ENCODE measurements at regions of chr17 and their contacts with region 1.

Region 1: DNA sequence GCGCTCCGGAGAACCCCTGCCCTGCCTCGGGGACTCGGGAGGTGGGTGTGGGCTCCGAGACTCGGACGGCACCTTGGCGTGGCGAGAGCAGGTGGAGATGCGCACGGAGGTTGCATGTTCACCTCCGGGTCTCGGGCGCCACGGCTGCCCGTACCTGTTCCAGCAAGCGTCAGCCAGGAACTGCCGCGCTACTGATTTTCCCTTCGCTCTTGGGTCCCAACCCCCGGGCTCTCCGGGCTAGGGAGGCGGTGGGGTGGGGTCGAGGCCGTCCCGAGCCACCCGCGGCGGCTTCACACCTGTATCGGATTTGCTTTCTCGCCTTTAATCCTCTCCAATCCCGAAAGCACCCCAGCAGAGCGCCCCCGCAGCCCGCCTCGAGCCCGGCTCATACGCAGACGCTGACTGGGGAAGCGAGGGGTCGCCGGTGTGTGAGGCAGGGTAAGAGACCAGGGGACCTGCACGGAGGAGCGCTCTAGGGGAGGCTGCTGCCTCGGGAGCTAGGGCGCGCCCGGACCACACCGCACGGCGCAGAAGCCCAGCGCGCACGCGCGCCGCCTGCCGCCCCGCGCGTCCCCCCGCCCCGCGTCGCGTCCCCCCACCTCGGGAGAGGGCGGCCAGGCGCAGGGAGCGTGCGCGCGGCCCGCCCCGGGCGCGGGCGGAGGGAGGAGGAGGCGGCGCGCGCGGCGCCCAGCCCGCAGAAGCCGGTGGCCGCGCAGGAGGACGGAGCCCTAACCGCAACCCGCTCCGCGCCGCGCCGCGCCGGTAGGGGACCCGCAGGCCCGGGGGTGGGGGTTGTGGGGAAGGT is at the start of gene DUSP14:
- DNase-seq: peak; percentile 91
- H3K4me3 ChIP-seq: peak within 1 kb of the TSS; percentile 88
- H3K27ac ChIP-seq: peak within 1 kb of the TSS; percentile 51
- H3K4me1 ChIP-seq: peaks cover 41% of the 10 kb centered on the region
- CTCF ChIP-seq: peak; percentile 59
- total RNA-seq, gene DUSP14: 21.2 and 21.5 TPM in 2 replicates

Region 2: GRCh38 chr17:37406635-37407461 is 82.6 kb before region 1 on chr17 and contains the starts of genes ACACA and TADA2A:
- CTCF ChIA-PET with region 1: no interaction called
- POLR2A ChIA-PET with region 1: interaction called, 3 read pairs
- intact Hi-C with region 1: loop called (anchors 2 kb)
- DNase-seq: peak; percentile 86
- H3K4me3 ChIP-seq: peak within 1 kb of the TSS; percentile 99
- H3K27ac ChIP-seq: peak within 1 kb of the TSS; percentile 70
- H3K4me1 ChIP-seq: peaks cover 24% of the 10 kb centered on the region
- CTCF ChIP-seq: 0 out of 2 replicates have a peak, but pooled peaks have one; percentile 10
- total RNA-seq, gene ACACA: 32.1 and 45.4 TPM in 2 replicates
- total RNA-seq, gene TADA2A: 35.8 and 53.5 TPM in 2 replicates

Measured in OCI-LY7 (cell line).